ENCODE measurements at regions of chr16 and their contacts with region 1.

Region 1: GRCh38 chr16:17138801-17139200 is 332.0 kb downstream of the XYLT1 start:
- DNase-seq: no peak
- ATAC-seq: no peak
- H3K4me3 ChIP-seq: no peak overlapping the region
- H3K27ac ChIP-seq: no peak overlapping the region
- H3K4me1 ChIP-seq: no peaks in the 10 kb centered on the region
- H3K27me3 ChIP-seq: peaks cover 0 to 2% (median 0%) of the 10 kb centered on the region in 3 donors
- CTCF ChIP-seq: no peak

Region 2: DNA sequence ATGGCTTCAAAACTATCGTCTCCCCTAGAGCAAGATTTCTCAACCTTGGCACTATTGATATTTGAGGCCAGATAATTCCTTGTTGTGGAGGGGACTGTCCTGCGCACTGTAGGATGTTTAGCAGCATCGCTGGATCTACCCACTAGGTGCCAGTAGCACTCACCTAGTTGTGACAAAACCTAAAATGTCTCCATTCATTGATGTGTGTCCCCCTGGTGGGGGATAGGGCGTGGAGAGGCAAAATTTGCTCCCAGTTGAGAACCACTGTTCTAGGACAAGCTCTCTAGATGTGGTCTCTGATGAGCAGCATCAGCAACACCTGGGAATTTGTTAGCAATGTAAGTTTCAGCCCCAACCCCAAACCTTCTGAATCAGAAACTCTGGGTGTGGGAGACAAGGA is 73.0 kb after region 1 on chr16:
- intact Hi-C with region 1: loop called in 1 of 2 experiments (anchors 2 kb)
- DNase-seq: no peak
- ATAC-seq: no peak
- H3K4me3 ChIP-seq: no peak overlapping the region
- H3K27ac ChIP-seq: no peak overlapping the region
- H3K4me1 ChIP-seq: no peaks in the 10 kb centered on the region
- H3K27me3 ChIP-seq: no peaks in the 10 kb centered on the region
- CTCF ChIP-seq: peak; percentile 12

Region 3: GRCh38 chr16:17448640-17449638 is 310.1 kb after region 1 on chr16:
- intact Hi-C with region 1: no loop called
- DNase-seq: peak; percentile 42 to 76
- ATAC-seq: peak in 3 of 4 donors; percentile 20 to 53 (median 46)
- H3K4me3 ChIP-seq: no peak overlapping the region
- H3K27ac ChIP-seq: no peak overlapping the region
- H3K4me1 ChIP-seq: no peaks in the 10 kb centered on the region
- H3K27me3 ChIP-seq: no peaks in the 10 kb centered on the region
- CTCF ChIP-seq: no peak